Sigmoid colon (tissue), 7 donors: ENCODE measurements at regions of chr6 and their contacts with region 1.

Region 1: GRCh38 chr6:110389689-110390382 is 25.5 kb downstream of the DDO start:
- DNase-seq: no peak
- H3K4me3 ChIP-seq: no peak overlapping the region
- H3K27ac ChIP-seq: peak overlapping the region in 3 of 4 donors; percentile 17 to 42 (median 23)
- H3K4me1 ChIP-seq: peaks cover 0 to 13% (median 11%) of the 10 kb centered on the region in 4 donors
- H3K27me3 ChIP-seq: no peaks in the 10 kb centered on the region
- CTCF ChIP-seq: no peak
- EP300 ChIP-seq: no peak
- POLR2A ChIP-seq: no peak

Region 2: GRCh38 chr6:110366256-110366655 is 23.6 kb before region 1 on chr6:
- intact Hi-C with region 1: loop called (anchors 2 kb)
- DNase-seq: no peak
- H3K4me3 ChIP-seq: no peak overlapping the region
- H3K27ac ChIP-seq: no peak overlapping the region
- H3K4me1 ChIP-seq: peaks cover 0 to 25% (median 21%) of the 10 kb centered on the region in 4 donors
- H3K27me3 ChIP-seq: no peaks in the 10 kb centered on the region
- CTCF ChIP-seq: no peak
- EP300 ChIP-seq: no peak
- POLR2A ChIP-seq: no peak